CD8-positive, alpha-beta T cell (primary cell): ENCODE measurements at regions of chr9 and their contacts with region 1.

Region 1: DNA sequence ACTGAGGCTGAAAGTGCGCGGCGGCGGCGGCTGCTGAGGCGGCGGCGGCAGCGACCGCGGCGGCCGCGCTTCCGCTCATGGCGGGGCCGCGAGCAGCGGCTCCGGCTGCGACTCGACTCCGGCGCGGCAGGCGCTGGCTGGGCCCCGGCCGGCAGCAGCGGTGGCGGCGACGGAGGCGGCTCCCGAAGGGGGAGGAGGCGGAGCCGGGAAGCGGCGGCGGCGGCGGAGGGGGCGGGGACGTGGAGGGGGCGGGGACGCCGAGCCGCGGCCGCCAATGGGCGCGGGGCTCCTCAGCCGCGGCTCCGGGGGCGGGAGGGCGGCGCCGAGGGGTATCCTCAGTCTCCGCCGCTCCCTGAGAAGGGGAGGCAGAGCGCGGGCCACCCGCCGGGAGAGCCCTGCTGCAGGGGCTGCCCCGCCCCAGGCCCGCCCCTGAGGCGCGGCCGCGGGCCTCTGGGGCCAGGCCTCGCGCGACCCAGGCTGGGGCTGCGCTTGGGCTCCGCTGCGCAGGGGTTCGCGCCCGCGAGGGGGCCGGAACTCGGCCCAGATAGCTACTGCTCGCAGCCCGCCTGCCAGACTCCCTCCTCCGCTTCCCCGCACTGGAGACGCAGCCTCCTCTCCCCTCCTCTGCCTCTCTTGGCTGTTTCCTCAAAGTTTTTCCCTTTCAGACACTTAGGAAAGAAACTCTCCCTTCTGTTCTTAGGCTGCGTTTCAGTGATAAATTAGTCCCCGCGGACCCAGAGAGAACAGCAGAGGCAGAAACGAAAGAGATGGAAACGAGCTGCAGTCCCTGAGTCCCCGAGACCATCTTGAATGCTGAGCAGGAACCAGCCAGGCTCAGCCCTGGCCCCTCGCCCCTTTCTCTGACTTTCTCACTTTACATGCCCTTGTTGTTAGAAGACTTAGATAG is 85.0 kb upstream of the MELK start:
- DNase-seq: peak; percentile 82 to 97 (median 89)
- ATAC-seq: peak; percentile 85
- H3K4me3 ChIP-seq: peak overlapping the region; percentile 78 to 79
- H3K4me3 Mint-ChIP-seq: peak overlapping the region; percentile 95
- H3K27ac ChIP-seq: peak overlapping the region; percentile 86 to 95
- H3K27ac Mint-ChIP-seq: peak overlapping the region; percentile 97
- H3K4me1 ChIP-seq: peaks cover 38% of the 10 kb centered on the region
- H3K4me1 Mint-ChIP-seq: peaks cover 63% of the 10 kb centered on the region
- H3K27me3 ChIP-seq: no peaks in the 10 kb centered on the region
- H3K27me3 Mint-ChIP-seq: no peaks in the 10 kb centered on the region
- CTCF ChIP-seq: no peak

Region 2: DNA sequence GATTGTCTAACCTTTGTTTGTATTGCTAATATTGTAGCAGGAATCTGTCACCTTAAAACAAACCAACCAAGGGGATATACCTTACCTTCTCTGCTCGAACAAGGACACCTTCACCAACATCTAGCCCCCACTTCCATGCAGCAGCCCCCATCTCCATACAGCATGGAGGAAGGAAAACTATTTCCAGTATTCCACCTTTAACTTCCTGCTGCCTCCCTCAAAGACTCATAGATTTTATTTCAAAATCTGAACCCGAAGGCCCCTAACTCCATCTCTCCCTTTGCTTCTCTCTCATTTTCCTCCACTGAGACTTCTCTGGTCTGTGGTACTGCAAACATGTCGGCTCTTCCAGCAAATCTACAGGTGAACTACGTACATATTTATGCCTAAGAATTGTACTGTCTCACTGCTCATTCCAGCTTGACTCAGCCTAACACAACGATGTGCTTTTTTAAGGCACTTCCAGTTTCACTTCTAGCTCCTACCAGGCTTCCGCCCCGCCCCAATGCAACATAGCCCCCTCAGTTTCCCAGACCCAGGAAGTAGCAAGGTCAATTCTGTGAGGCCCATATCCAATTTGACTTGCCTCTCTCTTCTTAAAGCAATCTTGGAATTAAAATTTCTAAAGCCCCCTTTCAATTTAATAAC is 17.0 kb before region 1 on chr9:
- CTCF ChIA-PET with region 1: interaction called, 3 read pairs
- POLR2A ChIA-PET with region 1: interaction called, 18 read pairs
- intact Hi-C with region 1: loop called (anchors 1 to 2 kb)
- DNase-seq: peak in 8 of 9 experiments; percentile 42 to 87 (median 64)
- ATAC-seq: peak; percentile 98
- H3K4me3 ChIP-seq: peak overlapping the region; percentile 43 to 45
- H3K4me3 Mint-ChIP-seq: peak overlapping the region; percentile 82
- H3K27ac ChIP-seq: peak overlapping the region; percentile 55 to 85
- H3K27ac Mint-ChIP-seq: peak overlapping the region; percentile 93
- H3K4me1 ChIP-seq: peaks cover 20% of the 10 kb centered on the region
- H3K4me1 Mint-ChIP-seq: peaks cover 42% of the 10 kb centered on the region
- H3K27me3 ChIP-seq: no peaks in the 10 kb centered on the region
- H3K27me3 Mint-ChIP-seq: no peaks in the 10 kb centered on the region
- CTCF ChIP-seq: no peak

Region 3: GRCh38 chr9:36560857-36561221 is 73.1 kb after region 1 on chr9:
- CTCF ChIA-PET with region 1: interaction called, 9 read pairs
- POLR2A ChIA-PET with region 1: no interaction called
- intact Hi-C with region 1: loop called in 1 of 2 experiments (anchors 5 kb)
- DNase-seq: no peak
- ATAC-seq: no peak
- H3K4me3 ChIP-seq: no peak overlapping the region
- H3K4me3 Mint-ChIP-seq: no peak overlapping the region
- H3K27ac ChIP-seq: no peak overlapping the region
- H3K27ac Mint-ChIP-seq: no peak overlapping the region
- H3K4me1 ChIP-seq: no peaks in the 10 kb centered on the region
- H3K4me1 Mint-ChIP-seq: peaks cover under 1% of the 10 kb centered on the region
- H3K27me3 ChIP-seq: peaks cover 0 to 3% of the 10 kb centered on the region in 2 experiments
- H3K27me3 Mint-ChIP-seq: no peaks in the 10 kb centered on the region
- CTCF ChIP-seq: no peak

Region 4: GRCh38 chr9:36765468-36766341 is 278.0 kb after region 1 on chr9:
- CTCF ChIA-PET with region 1: no interaction called
- POLR2A ChIA-PET with region 1: no interaction called
- intact Hi-C with region 1: loop called in 1 of 2 experiments (anchors 10 kb)
- DNase-seq: peak; percentile 68 to 95 (median 89)
- ATAC-seq: peak; percentile 99
- H3K4me3 ChIP-seq: peak overlapping the region; percentile 47 to 54
- H3K4me3 Mint-ChIP-seq: no peak overlapping the region
- H3K27ac ChIP-seq: peak overlapping the region; percentile 23 to 39
- H3K27ac Mint-ChIP-seq: peak overlapping the region; percentile 71
- H3K4me1 ChIP-seq: peaks cover 6% of the 10 kb centered on the region
- H3K4me1 Mint-ChIP-seq: peaks cover 6% of the 10 kb centered on the region
- H3K27me3 ChIP-seq: peaks cover 0 to 7% of the 10 kb centered on the region in 2 experiments
- H3K27me3 Mint-ChIP-seq: peaks cover 5% of the 10 kb centered on the region
- CTCF ChIP-seq: no peak